ENCODE measurements at regions of chr2 and their contacts with region 1.

Region 1: DNA sequence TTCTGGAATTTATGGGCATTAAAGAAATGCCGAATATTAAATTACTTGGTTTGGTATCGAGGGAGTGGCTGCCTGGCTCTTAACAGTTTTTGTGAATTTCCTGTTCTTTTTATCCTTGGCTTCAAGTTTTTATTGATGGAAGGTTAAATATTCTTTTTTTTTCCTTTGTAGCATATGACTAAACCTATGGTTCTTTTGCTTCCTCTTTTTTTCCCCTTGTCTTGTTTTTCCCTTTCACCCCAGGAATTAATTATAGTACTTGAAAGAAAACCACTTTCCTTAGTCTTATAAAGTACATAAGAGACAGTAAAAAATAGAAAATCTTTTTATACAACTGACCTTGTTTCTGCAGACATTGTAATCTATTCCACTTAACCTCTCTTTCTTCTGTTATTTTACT is 42.4 kb downstream of the MGAT5 start:
- DNase-seq: no peak
- H3K4me3 ChIP-seq: no peak overlapping the region
- H3K4me3 Mint-ChIP-seq: peak overlapping the region in 1 of 8 donors; percentile 54
- H3K27ac ChIP-seq: no peak overlapping the region
- H3K27ac Mint-ChIP-seq: peak overlapping the region in 1 of 7 donors; percentile 30
- H3K4me1 ChIP-seq: peaks cover 77% of the 10 kb centered on the region
- H3K4me1 Mint-ChIP-seq: peaks cover 58 to 66% (median 62%) of the 10 kb centered on the region in 4 donors
- H3K27me3 ChIP-seq: no peaks in the 10 kb centered on the region
- H3K27me3 Mint-ChIP-seq: no peaks in the 10 kb centered on the region

Region 2: GRCh38 chr2:134282629-134283400 is 13.5 kb before region 1 on chr2:
- CTCF ChIA-PET with region 1: interaction called, 3 read pairs
- POLR2A ChIA-PET with region 1: interaction called, 3 read pairs
- intact Hi-C with region 1: loop called (anchors 2 kb)
- DNase-seq: peak in 4 of 5 donors; percentile 26 to 50 (median 40)
- H3K4me3 ChIP-seq: no peak overlapping the region
- H3K4me3 Mint-ChIP-seq: peak overlapping the region in 7 of 8 donors; percentile 21 to 84 (median 74)
- H3K27ac ChIP-seq: peak overlapping the region; percentile 27
- H3K27ac Mint-ChIP-seq: peak overlapping the region; percentile 76 to 92 (median 88)
- H3K4me1 ChIP-seq: peaks cover 71% of the 10 kb centered on the region
- H3K4me1 Mint-ChIP-seq: peaks cover 63 to 71% (median 66%) of the 10 kb centered on the region in 4 donors
- H3K27me3 ChIP-seq: no peaks in the 10 kb centered on the region
- H3K27me3 Mint-ChIP-seq: no peaks in the 10 kb centered on the region

Region 3: GRCh38 chr2:134379293-134379692 is 83.0 kb after region 1 on chr2:
- CTCF ChIA-PET with region 1: no interaction called
- POLR2A ChIA-PET with region 1: no interaction called
- intact Hi-C with region 1: no loop called
- DNase-seq: no peak
- H3K4me3 ChIP-seq: no peak overlapping the region
- H3K4me3 Mint-ChIP-seq: no peak overlapping the region
- H3K27ac ChIP-seq: no peak overlapping the region
- H3K27ac Mint-ChIP-seq: peak overlapping the region in 4 of 7 donors; percentile 1 to 62 (median 36)
- H3K4me1 ChIP-seq: no peaks in the 10 kb centered on the region
- H3K4me1 Mint-ChIP-seq: peaks cover 4 to 10% (median 6%) of the 10 kb centered on the region in 4 donors
- H3K27me3 ChIP-seq: no peaks in the 10 kb centered on the region
- H3K27me3 Mint-ChIP-seq: no peaks in the 10 kb centered on the region